Right cardiac atrium (tissue), 5 donors: ENCODE measurements at regions of chr11 and their contacts with region 1.

Region 1: DNA sequence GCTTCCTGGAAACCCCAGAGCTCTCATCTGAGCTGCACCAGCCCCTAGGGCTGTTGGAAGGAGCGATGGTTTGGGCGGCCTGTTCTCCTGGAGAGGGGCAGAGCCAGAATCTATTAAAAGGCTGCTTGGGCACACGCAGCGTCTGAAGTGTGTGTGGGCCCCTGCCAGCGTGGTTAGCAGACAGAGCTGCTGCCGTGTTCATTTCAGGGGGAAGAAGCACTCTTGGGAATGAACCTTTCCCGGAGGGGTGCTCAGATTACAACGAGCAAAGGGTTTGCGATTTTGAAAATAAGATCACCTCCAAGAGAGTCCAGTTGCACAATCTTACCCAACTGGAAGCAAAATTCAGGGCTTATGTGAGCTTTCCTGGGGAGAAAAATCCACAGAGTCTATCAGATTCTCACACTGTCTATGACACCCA is 12.9 kb downstream of the ANO1 start:
- DNase-seq: peak in 2 of 3 donors; percentile 83
- ATAC-seq: peak; percentile 65 to 75
- H3K4me3 ChIP-seq: no peak overlapping the region
- H3K27ac ChIP-seq: no peak overlapping the region
- H3K4me1 ChIP-seq: no peaks in the 10 kb centered on the region
- H3K27me3 ChIP-seq: no peaks in the 10 kb centered on the region

Region 2: GRCh38 chr11:69943066-69943465 is 147.9 kb before region 1 on chr11:
- intact Hi-C with region 1: no loop called
- DNase-seq: no peak
- ATAC-seq: no peak
- H3K4me3 ChIP-seq: no peak overlapping the region
- H3K27ac ChIP-seq: peak overlapping the region; percentile 21
- H3K4me1 ChIP-seq: peaks cover 5% of the 10 kb centered on the region
- H3K27me3 ChIP-seq: no peaks in the 10 kb centered on the region

Region 3: DNA sequence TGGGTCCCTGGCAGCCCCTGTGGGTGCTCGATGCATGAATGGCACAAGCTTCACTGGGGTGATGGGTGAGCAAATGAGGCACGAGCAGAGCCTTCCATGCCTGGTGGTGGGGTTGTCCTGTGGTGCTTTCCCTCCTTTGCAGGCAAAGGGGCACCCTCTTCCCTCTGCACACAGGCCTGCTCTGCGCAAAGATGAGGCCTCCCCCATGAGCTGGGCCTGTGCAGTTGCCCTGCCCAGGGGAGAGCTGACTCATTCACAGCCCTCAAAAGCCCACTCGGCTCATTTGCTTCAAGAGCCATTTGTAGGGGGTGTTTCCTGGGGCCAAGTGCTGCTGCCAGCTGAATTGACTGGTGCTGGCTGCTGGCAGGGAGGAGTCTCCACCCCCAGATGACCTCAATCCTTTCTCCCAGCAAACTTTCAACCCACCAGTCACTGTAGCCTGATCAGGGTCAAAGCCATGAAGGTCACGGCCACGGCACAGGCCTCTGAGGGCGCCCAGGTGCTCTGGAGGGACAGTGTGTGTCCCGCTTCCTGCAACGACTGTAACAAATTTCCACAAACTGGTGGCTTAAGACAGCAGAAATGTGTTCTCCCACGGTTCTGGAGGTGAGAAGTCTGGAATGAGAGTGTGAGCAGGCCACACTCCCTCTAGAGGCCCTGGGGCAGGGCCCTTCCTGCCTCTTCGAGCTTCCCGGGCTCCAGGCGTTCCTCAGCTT is 61.7 kb before region 1 on chr11:
- intact Hi-C with region 1: no loop called
- DNase-seq: no peak
- ATAC-seq: peak; percentile 27 to 59
- H3K4me3 ChIP-seq: no peak overlapping the region
- H3K27ac ChIP-seq: no peak overlapping the region
- H3K4me1 ChIP-seq: peaks cover 4% of the 10 kb centered on the region
- H3K27me3 ChIP-seq: no peaks in the 10 kb centered on the region

Region 4: DNA sequence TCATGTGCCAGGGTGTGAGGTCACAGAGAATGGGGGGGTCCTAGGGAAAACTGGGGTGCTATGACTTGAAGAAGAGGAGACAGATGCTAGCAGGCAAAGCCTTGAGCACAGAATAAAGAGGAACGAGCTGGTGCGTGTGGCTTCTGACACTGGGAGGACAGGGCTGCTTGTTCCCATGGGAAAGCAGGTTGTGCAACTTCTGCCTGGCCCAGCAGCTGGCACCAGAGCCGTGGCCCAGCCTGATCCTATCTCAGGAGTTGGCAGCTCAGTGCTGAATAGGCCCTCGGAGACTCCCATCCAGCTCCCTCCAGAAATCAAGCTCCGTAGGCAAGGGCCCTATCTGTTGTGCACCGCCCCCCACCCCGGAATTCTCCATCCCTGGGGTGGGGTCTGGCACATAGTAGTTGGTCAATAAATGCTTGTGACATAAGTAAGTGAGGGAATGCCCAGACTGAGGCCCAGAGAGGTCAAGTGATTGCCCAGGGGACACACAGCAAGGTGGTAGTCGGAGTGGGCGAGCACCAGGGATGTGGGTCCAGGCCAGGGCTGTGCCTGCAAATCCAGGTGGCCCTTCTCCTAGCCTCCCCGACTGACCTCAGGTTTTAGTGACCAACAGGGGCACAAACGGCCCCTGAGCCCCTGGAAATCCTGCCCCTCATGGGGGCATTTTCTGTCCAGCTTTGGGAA is 92.7 kb after region 1 on chr11:
- intact Hi-C with region 1: loop called in 1 of 4 experiments (anchors 10 kb)
- DNase-seq: peak in 2 of 3 donors; percentile 44 to 50
- ATAC-seq: peak in 1 of 2 donors; percentile 37
- H3K4me3 ChIP-seq: no peak overlapping the region
- H3K27ac ChIP-seq: no peak overlapping the region
- H3K4me1 ChIP-seq: no peaks in the 10 kb centered on the region
- H3K27me3 ChIP-seq: no peaks in the 10 kb centered on the region